Activated CD4-positive, alpha-beta memory T cell treated with anti-CD3 and anti-CD28 coated beads for 36 hours (primary cell): ENCODE measurements at regions of chr18 and their contacts with region 1.

Region 1: DNA sequence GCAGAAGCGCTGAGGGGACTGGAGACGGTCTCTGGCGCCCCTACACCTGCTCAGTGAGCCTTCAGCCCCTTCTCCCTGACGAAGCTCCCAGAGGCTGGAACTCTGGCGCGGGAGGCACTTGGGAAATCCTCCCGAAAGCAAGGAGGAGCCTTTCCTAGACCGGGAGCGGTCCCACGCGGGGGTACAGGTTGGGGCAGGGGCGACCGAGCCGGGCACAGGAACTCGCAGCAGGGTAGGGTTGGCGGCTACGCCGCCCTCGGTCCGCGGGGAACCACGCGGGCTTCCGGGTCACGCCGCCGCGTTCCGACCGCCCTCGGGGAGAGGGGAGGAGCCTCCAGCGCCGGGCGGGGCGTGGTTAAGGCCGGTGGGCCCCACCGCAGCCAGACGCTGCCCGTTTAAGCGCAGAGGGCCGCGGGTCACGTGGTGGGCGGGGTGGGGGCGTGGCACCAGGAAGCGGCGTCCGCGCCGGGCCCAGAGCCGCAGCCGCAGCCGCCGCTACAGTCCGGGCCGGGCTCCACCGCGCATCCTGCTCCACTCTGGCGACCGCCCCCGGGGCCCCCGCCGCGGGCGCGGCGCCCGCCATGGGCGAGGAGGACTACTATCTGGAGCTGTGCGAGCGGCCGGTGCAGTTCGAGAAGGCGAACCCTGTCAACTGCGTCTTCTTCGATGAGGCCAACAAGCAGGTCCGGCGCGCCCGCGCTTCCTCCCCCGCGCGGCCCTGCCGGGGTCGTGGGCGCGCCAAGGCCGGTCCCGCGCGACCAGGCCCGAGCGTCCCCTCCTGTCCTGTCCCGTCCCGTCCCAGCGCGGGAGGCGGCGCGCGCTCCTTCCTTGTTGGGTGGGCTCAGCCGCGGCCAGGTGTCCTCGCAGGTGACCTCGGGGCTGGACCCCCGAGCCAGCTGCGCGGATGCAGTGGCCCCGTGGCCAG is at the start of gene RMC1:
- DNase-seq: peak; percentile 98
- H3K4me3 Mint-ChIP-seq: peak within 1 kb of the TSS; percentile 91
- H3K27ac Mint-ChIP-seq: peak within 1 kb of the TSS; percentile 87
- H3K4me1 Mint-ChIP-seq: peaks cover 32% of the 10 kb centered on the region
- H3K27me3 Mint-ChIP-seq: no peaks in the 10 kb centered on the region
- total RNA-seq, gene RMC1: 47.6 to 48.6 TPM

Region 2: DNA sequence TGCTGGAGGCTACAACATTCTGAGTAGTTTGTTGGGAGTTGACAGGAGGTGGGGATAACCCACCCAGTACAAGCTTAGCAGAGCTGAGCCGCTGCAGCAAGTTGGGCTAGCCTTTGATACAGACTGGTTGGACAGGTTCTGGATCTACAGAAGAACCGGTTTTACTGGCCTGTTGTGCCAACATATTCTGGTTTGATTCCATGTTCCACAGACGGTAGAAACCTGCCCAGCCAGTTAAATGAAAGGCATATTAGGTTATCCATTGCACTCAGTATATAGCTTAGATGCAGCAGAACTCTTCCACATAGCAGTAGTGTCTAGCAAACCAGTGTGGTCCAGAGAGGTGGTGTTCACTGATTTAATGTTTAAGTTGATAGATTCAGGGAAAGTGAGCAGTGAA is 589.4 kb before region 1 on chr18:
- CTCF ChIA-PET with region 1: no interaction called
- POLR2A ChIA-PET with region 1: no interaction called
- intact Hi-C with region 1: no loop called
- DNase-seq: no peak
- H3K4me3 Mint-ChIP-seq: no peak overlapping the region
- H3K27ac Mint-ChIP-seq: no peak overlapping the region
- H3K4me1 Mint-ChIP-seq: no peaks in the 10 kb centered on the region
- H3K27me3 Mint-ChIP-seq: peaks cover 3% of the 10 kb centered on the region

Region 3: DNA sequence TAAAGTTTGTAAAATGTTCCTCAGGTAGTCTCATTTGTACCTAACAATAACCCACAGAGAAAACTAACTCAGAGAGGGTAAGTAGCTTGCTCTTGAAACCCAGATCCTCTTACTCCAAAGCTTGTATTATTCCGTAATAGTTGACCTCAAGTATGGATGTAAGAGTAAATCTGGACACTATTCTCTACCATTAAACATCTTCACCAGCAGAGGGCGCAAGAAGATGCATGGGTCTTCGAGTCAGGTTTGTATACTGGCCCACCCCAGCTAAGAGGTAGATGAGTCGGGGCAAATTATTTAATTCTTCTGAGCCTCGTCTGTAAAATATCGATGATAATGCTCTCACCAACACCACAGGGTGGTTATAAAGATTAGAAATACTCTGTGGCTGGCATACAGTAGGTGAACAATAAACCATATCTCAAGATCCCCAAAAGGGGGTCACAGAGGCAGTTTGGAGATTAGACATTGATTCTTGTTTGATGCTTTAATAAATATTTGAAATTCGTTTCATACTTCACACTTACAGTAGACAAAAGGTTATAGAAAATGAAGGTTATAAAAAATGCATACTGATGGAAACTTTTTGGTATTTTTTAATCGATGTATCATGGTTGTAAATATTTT is 371.5 kb before region 1 on chr18:
- CTCF ChIA-PET with region 1: no interaction called
- POLR2A ChIA-PET with region 1: no interaction called
- intact Hi-C with region 1: loop called (anchors 5 kb)
- DNase-seq: peak; percentile 55
- H3K4me3 Mint-ChIP-seq: peak overlapping the region; percentile 8
- H3K27ac Mint-ChIP-seq: no peak overlapping the region
- H3K4me1 Mint-ChIP-seq: peaks cover 14% of the 10 kb centered on the region
- H3K27me3 Mint-ChIP-seq: peaks cover 25% of the 10 kb centered on the region

Region 4: GRCh38 chr18:23194155-23194996 is 308.9 kb before region 1 on chr18:
- CTCF ChIA-PET with region 1: no interaction called
- POLR2A ChIA-PET with region 1: no interaction called
- intact Hi-C with region 1: no loop called
- DNase-seq: no peak
- H3K4me3 Mint-ChIP-seq: no peak overlapping the region
- H3K27ac Mint-ChIP-seq: no peak overlapping the region
- H3K4me1 Mint-ChIP-seq: peaks cover 10% of the 10 kb centered on the region
- H3K27me3 Mint-ChIP-seq: peaks cover 2% of the 10 kb centered on the region

Region 5: DNA sequence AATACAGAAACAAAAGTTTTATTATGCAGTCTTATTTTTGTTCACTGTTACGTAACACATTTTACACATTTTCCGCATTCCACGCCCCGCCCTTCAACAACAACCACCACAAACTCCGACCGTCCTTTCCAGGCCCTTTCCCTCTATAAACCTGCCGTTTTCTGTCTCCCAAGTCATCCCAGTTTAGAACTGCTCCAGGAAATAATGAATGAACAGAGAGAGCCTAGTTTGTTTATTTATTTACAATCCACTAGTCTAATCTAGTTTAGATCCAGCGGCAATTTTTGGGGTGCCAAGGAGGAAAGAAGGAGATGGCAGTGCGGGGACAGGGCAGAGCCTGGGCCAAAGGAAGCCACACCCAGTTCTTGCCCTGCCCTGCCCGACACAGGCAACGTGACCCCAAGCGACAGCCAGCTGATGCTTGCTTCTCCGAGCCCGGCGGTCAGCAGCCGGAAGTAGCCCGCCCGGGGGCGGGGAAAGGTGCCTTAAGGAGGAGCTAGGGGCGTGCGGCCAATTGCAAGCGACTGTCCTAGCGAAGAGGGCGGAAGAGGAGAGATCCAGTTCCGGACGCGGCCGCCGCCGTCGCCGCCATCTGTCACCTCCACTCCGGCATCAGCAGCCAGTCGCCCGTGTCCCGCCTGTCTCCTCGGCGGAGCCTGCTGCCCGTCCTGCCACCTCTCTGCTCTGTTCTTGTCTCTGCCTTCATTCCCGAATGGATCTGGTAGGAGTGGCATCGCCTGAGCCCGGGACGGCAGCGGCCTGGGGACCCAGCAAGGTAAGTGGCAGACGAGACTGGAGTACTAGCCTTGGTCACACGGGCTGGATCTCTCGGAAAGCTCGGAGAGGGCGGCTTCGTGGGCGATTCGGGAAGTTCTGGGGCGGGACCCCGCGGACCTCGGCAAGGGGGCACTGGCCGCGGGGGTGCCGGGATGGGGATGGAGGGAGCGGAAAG is 50.3 kb before region 1 on chr18 and contains the start of gene RIOK3:
- CTCF ChIA-PET with region 1: interaction called, 3 read pairs
- POLR2A ChIA-PET with region 1: no interaction called
- intact Hi-C with region 1: loop called (anchors 1 kb)
- DNase-seq: peak; percentile 97
- H3K4me3 Mint-ChIP-seq: peak within 1 kb of the TSS; percentile 98
- H3K27ac Mint-ChIP-seq: peak within 1 kb of the TSS; percentile 88
- H3K4me1 Mint-ChIP-seq: peaks cover 39% of the 10 kb centered on the region
- H3K27me3 Mint-ChIP-seq: peaks cover 2% of the 10 kb centered on the region
- total RNA-seq, gene RIOK3: 51.0 to 55.8 TPM

Region 6: DNA sequence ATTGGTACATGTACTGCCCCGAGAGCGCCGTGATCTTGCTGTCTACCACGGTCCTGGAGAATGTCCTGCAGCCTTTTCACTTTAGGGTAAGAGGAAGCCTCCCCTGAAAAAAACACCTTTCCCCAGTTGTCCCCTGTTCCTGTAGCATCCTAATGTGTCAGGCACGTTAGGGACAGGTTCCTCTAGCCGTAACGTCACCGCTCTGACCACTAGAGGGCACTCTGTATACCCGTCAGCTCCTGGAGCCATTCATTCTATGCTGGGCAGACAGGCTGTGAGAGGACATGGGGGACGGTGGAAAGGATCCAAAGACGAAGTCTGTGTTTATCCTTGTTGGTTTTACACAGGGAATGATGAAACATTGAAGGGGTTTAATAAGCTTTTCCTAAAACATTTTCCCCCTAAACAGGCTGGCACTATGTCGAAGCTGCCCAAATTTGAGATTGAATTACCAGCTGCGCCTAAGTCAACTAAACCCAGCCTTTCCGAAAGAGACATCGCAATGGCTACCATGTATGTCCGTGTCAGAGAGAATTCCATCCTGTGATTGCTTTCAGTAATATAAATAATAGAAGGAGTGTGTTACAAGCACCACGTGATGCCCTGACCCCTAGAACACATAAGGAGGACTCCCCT is 12.7 kb after region 1 on chr18:
- CTCF ChIA-PET with region 1: interaction called, 22 read pairs
- POLR2A ChIA-PET with region 1: no interaction called
- intact Hi-C with region 1: loop called (anchors 1 kb)
- DNase-seq: peak; percentile 83
- H3K4me3 Mint-ChIP-seq: no peak overlapping the region
- H3K27ac Mint-ChIP-seq: peak overlapping the region; percentile 30
- H3K4me1 Mint-ChIP-seq: peaks cover 15% of the 10 kb centered on the region
- H3K27me3 Mint-ChIP-seq: no peaks in the 10 kb centered on the region

Region 7: DNA sequence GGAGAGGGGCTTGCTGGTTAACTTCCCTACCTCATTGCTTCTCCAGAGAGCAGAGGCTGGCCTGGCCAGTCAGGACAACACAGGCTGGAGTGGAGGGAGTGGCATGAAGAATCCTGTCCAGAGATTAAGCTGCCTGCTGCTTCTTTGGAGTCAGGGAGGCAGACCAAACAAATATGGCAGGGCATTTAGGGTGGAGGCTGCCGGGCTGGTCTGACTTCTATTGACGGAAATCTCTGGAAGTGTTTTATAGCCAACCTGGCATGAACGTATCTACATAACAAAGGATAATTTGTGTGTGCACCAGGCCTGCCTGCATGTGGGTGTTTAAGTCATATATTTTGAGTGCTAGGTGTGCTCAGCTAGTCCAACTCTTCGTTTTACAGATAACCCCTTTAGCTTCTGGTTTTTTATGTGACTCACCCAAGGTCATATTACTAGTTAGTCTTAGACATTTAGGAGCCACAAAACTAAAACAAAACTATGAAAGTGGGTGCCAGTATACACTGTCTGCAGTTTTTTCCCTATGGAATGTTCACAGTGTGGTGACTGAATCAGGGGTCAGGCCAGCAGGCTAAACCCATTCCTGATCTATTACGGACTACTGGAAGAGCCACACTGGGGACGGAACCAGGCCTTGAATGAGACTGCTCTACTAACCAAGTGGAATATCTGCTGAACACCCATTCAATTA is 77.5 kb after region 1 on chr18:
- CTCF ChIA-PET with region 1: interaction called, 18 read pairs
- POLR2A ChIA-PET with region 1: no interaction called
- intact Hi-C with region 1: loop called (anchors 1 kb)
- DNase-seq: no peak
- H3K4me3 Mint-ChIP-seq: no peak overlapping the region
- H3K27ac Mint-ChIP-seq: no peak overlapping the region
- H3K4me1 Mint-ChIP-seq: peaks cover 60% of the 10 kb centered on the region
- H3K27me3 Mint-ChIP-seq: no peaks in the 10 kb centered on the region

Region 8: DNA sequence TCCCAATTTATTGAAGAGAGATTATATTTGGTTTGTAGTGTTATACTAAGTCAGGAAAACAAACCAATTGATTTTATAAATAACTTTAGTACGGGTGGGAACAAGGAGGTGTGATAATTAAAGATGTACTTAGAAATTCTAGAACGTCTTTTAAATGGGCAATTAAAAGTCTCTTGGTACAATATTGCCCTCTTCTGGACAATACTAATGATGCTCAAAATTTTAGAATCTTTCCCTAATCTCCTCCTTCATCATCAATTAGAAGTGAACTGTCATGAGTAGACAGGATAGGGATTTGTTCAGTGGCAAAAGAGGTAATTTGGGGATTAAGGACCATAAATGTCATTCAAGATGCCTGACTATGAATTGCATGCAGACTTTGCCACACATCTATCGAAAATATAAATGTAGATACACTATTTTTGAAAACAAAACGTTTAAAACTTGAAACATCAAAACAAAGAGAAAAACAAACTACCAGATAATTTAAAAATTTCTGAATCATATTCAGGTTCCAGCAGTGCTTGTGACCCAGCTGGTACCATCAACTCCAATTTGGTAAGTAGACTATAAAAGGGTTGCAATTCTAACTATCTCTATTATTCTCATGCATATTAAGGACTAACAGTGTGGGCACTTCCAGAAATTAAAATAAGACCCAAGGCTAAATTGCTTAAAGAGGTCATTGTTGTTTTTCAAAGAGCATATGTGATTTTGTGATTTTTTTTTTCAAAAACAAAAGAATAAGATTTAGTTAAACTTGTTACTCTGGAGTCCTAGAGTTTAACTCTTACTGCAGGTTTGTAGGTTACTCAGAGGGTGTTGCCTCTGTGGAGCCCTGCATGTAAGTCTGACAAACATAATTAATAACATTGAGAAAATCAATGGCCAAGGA is 309.5 kb after region 1 on chr18:
- CTCF ChIA-PET with region 1: interaction called, 8 read pairs
- POLR2A ChIA-PET with region 1: no interaction called
- intact Hi-C with region 1: loop called (anchors 2 kb)
- DNase-seq: no peak
- H3K4me3 Mint-ChIP-seq: no peak overlapping the region
- H3K27ac Mint-ChIP-seq: no peak overlapping the region
- H3K4me1 Mint-ChIP-seq: peaks cover 6% of the 10 kb centered on the region
- H3K27me3 Mint-ChIP-seq: peaks cover 5% of the 10 kb centered on the region

Region 9: DNA sequence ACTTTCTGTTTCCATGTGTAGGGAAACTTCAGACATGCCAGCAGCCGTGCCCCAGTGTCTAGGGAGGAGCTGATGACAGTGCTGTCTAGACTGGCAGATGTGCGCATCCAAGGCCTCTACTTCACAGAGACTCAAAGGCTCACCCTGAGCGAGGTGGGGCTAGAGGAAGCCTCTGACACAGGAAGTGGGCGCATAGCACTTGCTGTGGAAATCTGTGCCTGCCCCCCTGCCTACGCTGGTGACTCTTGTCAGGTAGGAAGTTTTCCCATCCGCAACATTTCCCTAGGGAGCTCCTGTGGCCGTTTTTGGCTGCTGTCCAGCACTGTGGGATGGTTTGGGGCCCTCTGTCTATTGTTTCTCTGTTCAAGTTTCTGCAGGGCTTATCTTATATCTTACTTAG is 368.1 kb after region 1 on chr18:
- CTCF ChIA-PET with region 1: no interaction called
- POLR2A ChIA-PET with region 1: no interaction called
- intact Hi-C with region 1: no loop called
- DNase-seq: peak; percentile 62
- H3K4me3 Mint-ChIP-seq: no peak overlapping the region
- H3K27ac Mint-ChIP-seq: peak overlapping the region; percentile 16
- H3K4me1 Mint-ChIP-seq: peaks cover 30% of the 10 kb centered on the region
- H3K27me3 Mint-ChIP-seq: no peaks in the 10 kb centered on the region